Activated T-helper 1 cell treated with anti-CD3 and anti-CD28 coated beads, Interleukin-12 subunit alpha, Interleukin-12 subunit beta, Interleukin-2, Interleukin-4 antibody, amounts not matched to agents 30 ng/mL and 10 ng/mL and 1 ng/mL, durations not matched to agents 14 hours and 24 hours and 36 hours (primary cell): ENCODE measurements at regions of chr19 and their contacts with region 1.

Region 1: DNA sequence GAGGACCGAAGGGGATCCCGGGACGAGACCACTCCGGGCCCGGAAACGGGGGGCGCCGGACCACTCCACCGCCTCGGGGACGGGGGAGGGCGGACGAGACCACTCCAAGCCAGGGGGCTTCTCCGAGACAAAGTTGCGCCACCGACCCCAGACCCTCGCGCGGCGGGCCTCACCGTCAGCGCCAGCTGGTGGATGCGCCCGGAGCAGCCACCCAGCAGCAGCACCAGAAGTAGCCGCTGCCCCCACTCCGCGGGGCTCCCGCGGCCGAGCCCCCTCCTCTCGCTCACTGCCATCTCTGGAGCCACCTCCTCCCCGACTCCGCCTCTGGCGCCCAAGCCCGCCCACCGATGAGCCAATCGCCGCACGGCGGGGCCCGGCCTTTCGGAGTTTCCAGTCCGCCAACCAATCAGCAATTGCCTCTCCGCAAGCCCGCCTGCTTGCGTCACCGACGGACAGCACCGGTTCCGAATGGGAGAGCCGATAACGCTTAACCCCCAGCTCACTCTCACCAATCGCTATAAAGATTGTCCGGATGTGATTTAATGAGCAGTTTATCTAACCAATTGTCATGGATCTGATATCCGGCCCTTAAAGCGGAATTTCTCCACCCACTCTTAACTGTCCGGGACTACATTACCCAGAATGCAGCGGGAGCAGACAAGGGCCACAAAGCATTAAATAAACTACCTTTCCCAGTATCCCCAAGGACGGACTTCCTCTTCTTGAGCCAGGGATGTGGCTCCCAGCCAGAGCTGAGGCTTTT is at the start of gene GPR108:
- DNase-seq: peak; percentile 100
- H3K4me3 Mint-ChIP-seq: peak within 1 kb of the TSS; percentile 96
- H3K27ac Mint-ChIP-seq: peak within 1 kb of the TSS; percentile 99
- H3K4me1 Mint-ChIP-seq: peaks cover 42% of the 10 kb centered on the region
- H3K27me3 Mint-ChIP-seq: no peaks in the 10 kb centered on the region
- total RNA-seq, gene GPR108: 106 and 108 TPM in 2 replicates

Region 2: GRCh38 chr19:6424939-6425731 is 312.3 kb before region 1 on chr19:
- intact Hi-C with region 1: loop called (anchors 1 kb)
- DNase-seq: peak; percentile 99
- H3K4me3 Mint-ChIP-seq: peak overlapping the region; percentile 79
- H3K27ac Mint-ChIP-seq: peak overlapping the region; percentile 90
- H3K4me1 Mint-ChIP-seq: peaks cover 28% of the 10 kb centered on the region
- H3K27me3 Mint-ChIP-seq: no peaks in the 10 kb centered on the region

Region 3: GRCh38 chr19:6530386-6531161 is 206.9 kb before region 1 on chr19 and contains the start of gene TNFSF9:
- intact Hi-C with region 1: loop called (anchors 5 kb)
- DNase-seq: peak; percentile 77
- H3K4me3 Mint-ChIP-seq: peak within 1 kb of the TSS; percentile 90
- H3K27ac Mint-ChIP-seq: peak within 1 kb of the TSS; percentile 83
- H3K4me1 Mint-ChIP-seq: peaks cover 39% of the 10 kb centered on the region
- H3K27me3 Mint-ChIP-seq: peaks cover 32% of the 10 kb centered on the region
- total RNA-seq, gene TNFSF9: 8.0 and 9.7 TPM in 2 replicates

Region 4: GRCh38 chr19:6654347-6655310 is 82.8 kb before region 1 on chr19:
- intact Hi-C with region 1: loop called (anchors 2 kb)
- DNase-seq: peak; percentile 55
- H3K4me3 Mint-ChIP-seq: peak overlapping the region; percentile 75
- H3K27ac Mint-ChIP-seq: peak overlapping the region; percentile 98
- H3K4me1 Mint-ChIP-seq: peaks cover 76% of the 10 kb centered on the region
- H3K27me3 Mint-ChIP-seq: no peaks in the 10 kb centered on the region

Region 5: GRCh38 chr19:6718741-6719539 is 18.5 kb before region 1 on chr19:
- intact Hi-C with region 1: loop called (anchors 1 kb)
- DNase-seq: no peak
- H3K4me3 Mint-ChIP-seq: no peak overlapping the region
- H3K27ac Mint-ChIP-seq: no peak overlapping the region
- H3K4me1 Mint-ChIP-seq: peaks cover 32% of the 10 kb centered on the region
- H3K27me3 Mint-ChIP-seq: peaks cover 4% of the 10 kb centered on the region

Region 6: DNA sequence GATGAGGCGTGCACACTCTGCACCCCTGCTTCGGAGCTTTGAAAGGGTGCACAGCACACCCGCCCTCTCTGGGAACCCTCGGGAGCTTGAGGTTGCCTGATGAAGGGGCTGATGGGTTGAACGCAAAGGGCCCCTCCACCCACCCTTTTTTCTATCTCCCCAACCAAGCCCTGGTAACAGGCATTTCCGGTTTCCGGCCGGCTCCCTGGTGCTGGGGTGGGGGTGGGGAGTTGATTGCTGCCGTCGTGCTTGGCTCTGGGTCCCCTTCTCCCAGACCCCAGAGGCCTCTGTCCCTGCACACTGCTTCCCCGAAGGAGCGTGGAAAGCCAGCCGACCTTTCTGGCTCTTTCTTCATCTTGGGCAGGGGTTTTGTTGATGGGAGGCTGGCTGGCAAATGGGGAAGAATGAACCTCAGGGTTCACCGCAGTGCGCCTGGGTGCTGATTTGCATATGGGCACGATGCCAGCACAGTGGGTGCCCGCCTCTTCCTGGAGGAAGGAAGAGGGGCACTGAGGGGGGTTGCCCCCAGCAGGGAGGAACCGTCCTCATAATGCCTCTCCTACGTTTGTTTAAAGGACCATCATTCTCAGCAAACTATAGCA is 64.1 kb after region 1 on chr19:
- intact Hi-C with region 1: loop called (anchors 1 kb)
- DNase-seq: peak; percentile 72
- H3K4me3 Mint-ChIP-seq: peak overlapping the region; percentile 92
- H3K27ac Mint-ChIP-seq: peak overlapping the region; percentile 99
- H3K4me1 Mint-ChIP-seq: peaks cover 61% of the 10 kb centered on the region
- H3K27me3 Mint-ChIP-seq: no peaks in the 10 kb centered on the region